CD8-positive, alpha-beta T cell (primary cell): ENCODE measurements at regions of chr9 and their contacts with region 1.

Region 1: DNA sequence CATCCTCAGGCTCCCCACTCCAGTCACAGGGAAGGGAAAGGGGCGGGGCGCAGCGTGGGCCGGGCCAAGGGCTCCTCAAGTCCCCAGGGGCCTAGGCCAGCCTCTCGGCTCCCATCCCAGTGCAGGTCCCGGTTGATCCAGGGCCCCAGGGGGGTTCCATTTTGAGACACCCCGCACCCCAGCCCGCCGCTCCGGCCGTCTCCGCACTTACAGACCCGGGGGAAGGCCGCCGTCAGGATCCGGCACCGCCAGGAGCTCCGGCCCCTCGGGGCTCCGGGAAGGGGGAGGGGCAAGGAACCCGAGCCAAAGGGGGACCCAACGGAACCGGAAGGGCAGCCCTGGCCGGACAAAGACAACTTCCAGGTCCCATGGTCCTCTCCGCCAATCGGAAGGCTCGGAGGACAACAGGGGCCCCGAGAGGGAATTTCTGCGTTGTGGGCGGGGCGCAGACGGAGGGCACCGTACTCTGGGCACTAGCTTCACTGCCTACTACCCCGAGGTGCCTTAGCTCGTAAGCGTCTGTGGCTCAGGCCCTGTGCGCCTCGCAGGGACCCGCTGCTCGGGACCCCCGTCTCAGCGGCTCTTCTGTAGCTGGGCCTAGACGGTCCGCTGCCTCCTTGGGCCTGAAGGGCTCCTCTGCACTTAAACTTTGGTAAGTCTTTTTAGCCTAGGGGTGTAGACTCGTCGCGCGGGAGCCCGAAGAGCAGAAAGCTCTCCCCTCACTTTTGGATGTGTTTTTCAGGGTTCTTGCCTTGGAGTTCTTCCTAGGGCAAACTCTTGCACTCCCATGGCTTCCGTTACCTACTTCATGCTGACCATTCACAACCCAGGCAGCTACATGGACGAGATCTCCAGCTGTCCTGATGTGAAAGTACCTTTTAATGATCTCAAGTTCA is at the start of gene ZBTB26:
- DNase-seq: peak; percentile 78 to 96 (median 90)
- ATAC-seq: peak; percentile 96
- H3K4me3 ChIP-seq: peak within 1 kb of the TSS; percentile 67 to 86
- H3K4me3 Mint-ChIP-seq: no peak within 1 kb of the TSS
- H3K27ac ChIP-seq: peak within 1 kb of the TSS; percentile 54 to 96
- H3K27ac Mint-ChIP-seq: no peak within 1 kb of the TSS
- H3K4me1 ChIP-seq: peaks cover 29% of the 10 kb centered on the region
- H3K4me1 Mint-ChIP-seq: peaks cover 19% of the 10 kb centered on the region
- H3K27me3 ChIP-seq: no peaks in the 10 kb centered on the region
- H3K27me3 Mint-ChIP-seq: no peaks in the 10 kb centered on the region
- CTCF ChIP-seq: no peak
- total RNA-seq, gene ZBTB26: 4.9 to 5.9 TPM

Region 2: DNA sequence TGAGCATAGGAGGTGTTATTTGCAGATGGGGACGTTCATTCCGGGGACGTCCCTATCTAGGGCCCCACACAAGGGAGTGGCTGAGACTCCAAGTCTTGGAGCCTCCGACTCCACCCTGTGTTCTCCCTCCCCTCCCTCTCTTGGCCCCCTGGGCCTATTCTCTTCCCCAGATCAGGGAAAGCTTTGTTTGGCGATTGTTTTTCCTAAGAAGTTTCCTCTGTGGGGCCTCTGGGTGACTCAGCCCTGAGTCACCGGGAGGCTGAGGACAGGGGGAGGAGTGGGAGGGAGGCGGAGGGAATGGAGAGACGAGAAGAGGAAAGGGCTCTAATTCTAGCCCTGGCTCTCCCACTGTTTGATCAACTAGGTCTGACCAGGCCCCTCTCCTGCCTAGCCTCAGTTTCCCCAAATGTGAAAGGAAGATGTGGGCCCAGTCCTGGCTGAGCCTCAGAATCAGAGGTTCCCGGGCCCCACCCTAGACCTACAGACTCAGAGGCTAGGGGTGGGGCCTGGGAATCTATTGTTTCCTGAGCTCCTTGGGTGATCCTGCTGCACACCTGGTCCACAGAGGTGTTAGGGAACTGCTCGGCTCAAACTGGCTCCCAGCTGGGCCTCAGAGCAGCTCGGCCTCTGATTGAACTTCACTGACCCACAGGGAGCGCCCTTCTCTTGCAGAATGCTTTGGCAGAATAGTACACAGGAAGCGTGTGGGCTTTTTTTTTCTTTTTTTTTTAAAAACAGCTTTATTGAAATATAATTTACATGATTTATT is 1644.3 kb before region 1 on chr9:
- CTCF ChIA-PET with region 1: no interaction called
- POLR2A ChIA-PET with region 1: no interaction called
- intact Hi-C with region 1: no loop called
- DNase-seq: peak in 1 of 9 experiments; percentile 22
- ATAC-seq: no peak
- H3K4me3 ChIP-seq: no peak overlapping the region
- H3K4me3 Mint-ChIP-seq: no peak overlapping the region
- H3K27ac ChIP-seq: no peak overlapping the region
- H3K27ac Mint-ChIP-seq: no peak overlapping the region
- H3K4me1 ChIP-seq: no peaks in the 10 kb centered on the region
- H3K4me1 Mint-ChIP-seq: peaks cover 2% of the 10 kb centered on the region
- H3K27me3 ChIP-seq: no peaks in the 10 kb centered on the region
- H3K27me3 Mint-ChIP-seq: no peaks in the 10 kb centered on the region
- CTCF ChIP-seq: no peak

Region 3: GRCh38 chr9:122875523-122875922 is 56.0 kb before region 1 on chr9:
- CTCF ChIA-PET with region 1: no interaction called
- POLR2A ChIA-PET with region 1: no interaction called
- intact Hi-C with region 1: no loop called
- DNase-seq: no peak
- ATAC-seq: no peak
- H3K4me3 ChIP-seq: no peak overlapping the region
- H3K4me3 Mint-ChIP-seq: no peak overlapping the region
- H3K27ac ChIP-seq: no peak overlapping the region
- H3K27ac Mint-ChIP-seq: peak overlapping the region; percentile 12
- H3K4me1 ChIP-seq: no peaks in the 10 kb centered on the region
- H3K4me1 Mint-ChIP-seq: peaks cover 3% of the 10 kb centered on the region
- H3K27me3 ChIP-seq: no peaks in the 10 kb centered on the region
- H3K27me3 Mint-ChIP-seq: no peaks in the 10 kb centered on the region
- CTCF ChIP-seq: no peak

Region 4: DNA sequence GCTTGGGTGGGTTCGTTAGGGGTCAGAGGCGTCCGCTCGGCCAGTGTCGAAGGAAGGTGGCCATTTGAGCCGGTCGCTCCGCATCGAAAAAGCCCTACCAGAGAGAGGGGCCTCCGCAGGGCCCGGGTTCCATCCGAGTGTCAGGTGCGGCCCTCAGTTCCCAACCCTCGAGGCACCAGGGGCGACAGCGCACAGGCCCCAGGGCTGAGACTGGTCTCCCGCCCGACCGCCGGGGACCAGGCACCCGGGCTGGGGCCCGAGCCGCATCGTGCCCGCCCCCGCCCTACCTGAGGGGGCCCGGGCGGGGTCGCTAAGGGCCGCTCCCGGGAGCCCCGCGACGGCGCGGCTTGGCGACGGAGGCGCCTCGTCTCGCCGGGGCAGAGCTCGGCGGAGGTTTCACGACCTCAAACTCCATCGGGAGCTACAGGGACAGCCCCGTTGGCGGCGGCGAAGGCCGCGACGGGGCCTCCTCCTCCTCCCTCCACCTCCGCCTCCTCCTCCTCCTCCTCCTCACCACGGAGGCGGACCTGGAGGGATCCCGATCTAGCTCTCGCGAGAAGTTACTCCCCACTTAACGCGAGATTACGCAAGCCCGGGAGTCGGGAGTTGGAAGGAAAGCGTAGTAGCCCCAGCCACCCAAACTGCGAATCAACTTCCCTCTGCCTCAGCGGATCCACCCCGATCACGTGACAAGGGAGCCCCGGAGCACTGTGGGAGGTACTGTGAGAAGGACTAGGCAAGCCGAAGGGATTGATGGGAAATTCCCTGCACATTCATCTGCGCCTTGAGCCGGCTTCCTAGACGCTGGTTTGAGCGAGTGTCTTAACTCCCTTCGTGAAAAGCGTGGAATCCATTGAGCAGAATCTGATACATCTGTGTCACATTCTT is 26.4 kb before region 1 on chr9 and contains the start of gene RC3H2:
- CTCF ChIA-PET with region 1: no interaction called
- POLR2A ChIA-PET with region 1: interaction called, 20 read pairs
- intact Hi-C with region 1: loop called (anchors 1 kb)
- DNase-seq: peak; percentile 92 to 100 (median 97)
- ATAC-seq: peak; percentile 91
- H3K4me3 ChIP-seq: peak within 1 kb of the TSS; percentile 66 to 92
- H3K4me3 Mint-ChIP-seq: peak within 1 kb of the TSS; percentile 94
- H3K27ac ChIP-seq: peak within 1 kb of the TSS; percentile 67 to 94
- H3K27ac Mint-ChIP-seq: peak within 1 kb of the TSS; percentile 98
- H3K4me1 ChIP-seq: peaks cover 32% of the 10 kb centered on the region
- H3K4me1 Mint-ChIP-seq: peaks cover 26% of the 10 kb centered on the region
- H3K27me3 ChIP-seq: no peaks in the 10 kb centered on the region
- H3K27me3 Mint-ChIP-seq: no peaks in the 10 kb centered on the region
- CTCF ChIP-seq: no peak
- total RNA-seq, gene RC3H2: 77.6 to 79.5 TPM

Region 5: DNA sequence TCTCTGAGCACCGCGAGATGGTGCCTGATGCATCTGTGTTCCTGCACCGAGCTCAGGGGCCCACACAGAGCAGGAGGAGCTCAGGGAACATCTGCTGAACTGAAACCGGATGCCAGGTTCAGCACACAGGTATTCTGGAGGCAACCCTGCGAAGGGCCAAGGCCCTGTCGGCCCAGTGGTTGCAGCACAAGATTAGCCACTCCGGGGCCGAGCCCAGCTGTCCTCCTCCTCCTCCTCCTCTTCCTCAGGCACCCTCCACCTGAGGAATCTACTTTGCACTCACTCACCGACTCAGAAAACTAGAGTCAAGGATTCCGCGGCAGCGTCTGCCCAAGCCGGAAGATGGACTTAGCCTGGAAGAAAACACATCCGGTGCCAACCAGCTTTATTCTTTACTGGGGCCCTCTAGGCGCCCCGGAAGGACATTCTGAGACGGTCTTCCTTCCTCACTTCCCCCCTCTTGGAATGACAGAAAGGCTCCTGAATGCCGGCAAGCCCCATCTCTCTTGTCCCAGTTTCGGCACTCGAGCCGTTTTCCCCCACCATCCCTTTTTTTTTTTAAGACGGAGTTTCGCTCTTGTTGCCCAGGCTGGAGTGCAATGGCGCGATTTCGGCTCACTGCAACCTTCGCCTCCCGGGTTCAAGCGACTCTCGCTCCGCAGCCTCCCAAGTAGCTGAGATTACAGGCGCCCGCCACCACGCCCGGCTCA is 18.4 kb before region 1 on chr9 and contains the start of gene ZBTB6:
- CTCF ChIA-PET with region 1: interaction called, 4 read pairs
- POLR2A ChIA-PET with region 1: interaction called, 21 read pairs
- intact Hi-C with region 1: loop called (anchors 1 kb)
- DNase-seq: peak; percentile 50 to 90 (median 68)
- ATAC-seq: peak; percentile 97
- H3K4me3 ChIP-seq: peak within 1 kb of the TSS; percentile 80 to 86
- H3K4me3 Mint-ChIP-seq: peak within 1 kb of the TSS; percentile 98
- H3K27ac ChIP-seq: peak within 1 kb of the TSS; percentile 70 to 92
- H3K27ac Mint-ChIP-seq: peak within 1 kb of the TSS; percentile 94
- H3K4me1 ChIP-seq: peaks cover 15% of the 10 kb centered on the region
- H3K4me1 Mint-ChIP-seq: peaks cover 36% of the 10 kb centered on the region
- H3K27me3 ChIP-seq: no peaks in the 10 kb centered on the region
- H3K27me3 Mint-ChIP-seq: no peaks in the 10 kb centered on the region
- CTCF ChIP-seq: no peak
- total RNA-seq, gene ZBTB6: 3.6 to 3.7 TPM